Activated CD4-positive, alpha-beta T cell treated with anti-CD3 and anti-CD28 coated beads for 36 hours (primary cell): ENCODE measurements at regions of chr22 and their contacts with region 1.

Region 1: DNA sequence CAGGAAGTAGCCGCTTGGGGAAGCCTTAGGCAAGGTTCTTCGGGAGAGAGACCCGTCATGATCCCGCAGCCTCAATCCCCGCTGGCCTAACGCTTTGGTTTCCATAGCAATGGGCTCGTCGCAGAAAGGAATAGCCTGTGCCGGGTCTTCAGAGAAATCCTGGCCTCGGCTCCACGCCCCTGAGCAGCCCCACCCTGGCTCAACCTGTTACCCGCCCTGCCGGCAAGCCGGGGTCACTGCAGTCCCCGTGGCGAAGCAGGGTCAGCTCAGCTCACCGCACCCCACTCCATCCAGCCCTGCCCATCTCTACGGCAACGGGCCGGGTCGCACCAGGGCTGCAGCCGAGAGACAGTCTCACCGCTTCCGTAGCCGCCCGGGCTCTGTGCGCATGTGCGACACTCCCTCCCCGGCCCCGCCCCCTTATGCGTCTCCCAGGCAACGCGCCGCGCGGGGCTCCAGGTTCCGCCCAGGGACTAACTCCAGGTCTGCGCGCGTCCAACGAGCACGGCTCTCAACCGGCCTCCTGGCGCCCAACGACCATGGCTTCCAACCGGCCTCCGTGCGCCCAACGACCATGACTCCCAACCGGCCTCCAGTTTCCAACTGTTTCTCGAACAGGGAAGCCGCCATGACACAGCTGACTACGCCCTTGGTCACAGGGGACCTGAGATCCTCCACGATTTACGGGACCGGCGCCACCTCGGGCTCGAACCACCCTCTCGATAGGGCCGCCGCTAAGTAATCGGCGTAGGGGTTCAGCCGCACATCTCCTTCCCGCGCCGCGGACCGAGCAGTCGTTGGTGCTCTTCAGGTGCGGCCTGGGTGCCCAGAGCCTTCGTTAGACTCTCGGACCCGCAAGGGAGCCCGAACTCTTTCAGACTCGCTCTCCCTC is at the start of gene DUSP18:
- DNase-seq: peak; percentile 96
- ATAC-seq: peak; percentile 94
- H3K4me3 Mint-ChIP-seq: peak within 1 kb of the TSS; percentile 92
- H3K27ac Mint-ChIP-seq: peak within 1 kb of the TSS; percentile 69
- H3K4me1 Mint-ChIP-seq: peaks cover 19% of the 10 kb centered on the region
- H3K27me3 Mint-ChIP-seq: peaks cover 3% of the 10 kb centered on the region
- total RNA-seq, gene DUSP18: 7.8 to 8.5 TPM

Region 2: GRCh38 chr22:30602049-30602448 is 65.7 kb before region 1 on chr22:
- CTCF ChIA-PET with region 1: no interaction called
- POLR2A ChIA-PET with region 1: no interaction called
- intact Hi-C with region 1: no loop called
- DNase-seq: peak; percentile 33
- ATAC-seq: peak; percentile 42
- H3K4me3 Mint-ChIP-seq: no peak overlapping the region
- H3K27ac Mint-ChIP-seq: no peak overlapping the region
- H3K4me1 Mint-ChIP-seq: peaks cover 13% of the 10 kb centered on the region
- H3K27me3 Mint-ChIP-seq: no peaks in the 10 kb centered on the region

Region 3: GRCh38 chr22:30694171-30694639 is 26.5 kb after region 1 on chr22:
- CTCF ChIA-PET with region 1: no interaction called
- POLR2A ChIA-PET with region 1: no interaction called
- intact Hi-C with region 1: loop called in 1 of 2 experiments (anchors 1 kb)
- DNase-seq: peak; percentile 72
- ATAC-seq: peak; percentile 76
- H3K4me3 Mint-ChIP-seq: peak overlapping the region; percentile 79
- H3K27ac Mint-ChIP-seq: peak overlapping the region; percentile 74
- H3K4me1 Mint-ChIP-seq: peaks cover 5% of the 10 kb centered on the region
- H3K27me3 Mint-ChIP-seq: peaks cover 18% of the 10 kb centered on the region